SK-N-SH (cell line): ENCODE measurements at regions of chr6 and their contacts with region 1.

Region 1: DNA sequence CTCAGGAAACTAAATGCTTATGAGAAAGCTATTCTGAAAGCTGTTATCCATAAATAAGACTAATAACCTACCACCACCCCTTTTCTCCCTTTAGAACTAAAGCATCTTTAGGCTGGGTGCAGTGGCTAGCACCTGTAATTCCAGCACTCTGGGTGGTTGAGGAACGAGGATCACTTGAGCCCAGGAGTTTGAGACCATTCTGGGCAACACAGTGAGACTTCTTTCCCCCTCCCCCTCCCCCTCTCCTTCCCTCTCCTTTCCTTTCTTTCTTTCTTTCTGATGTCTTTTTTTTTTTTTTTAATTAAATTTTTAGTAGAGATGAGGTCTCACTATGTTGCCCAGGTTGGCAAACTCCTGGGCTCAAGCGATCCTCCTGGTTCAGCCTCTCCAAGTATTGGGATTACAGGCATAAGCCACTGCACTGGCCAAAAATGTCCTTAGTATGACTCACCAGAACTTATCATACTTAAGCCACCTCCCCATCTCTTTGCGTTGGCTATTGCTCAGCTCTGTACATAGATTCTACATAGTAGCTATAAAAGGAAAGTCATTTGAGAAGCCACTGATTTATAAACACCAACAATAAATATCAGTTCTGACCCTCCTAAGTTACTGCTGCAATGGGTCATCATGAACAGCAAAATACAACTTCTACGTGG is 54.8 kb upstream of the SPDEF start:
- DNase-seq: no peak
- H3K4me3 ChIP-seq: no peak overlapping the region
- H3K27ac ChIP-seq: peak overlapping the region in 1 of 2 experiments; percentile 59; a peak in 2 of 4 replicates
- H3K4me1 ChIP-seq: peaks cover 0 to 14% of the 10 kb centered on the region in 2 experiments; a peak in 2 of 4 replicates
- H3K27me3 ChIP-seq: no peaks in the 10 kb centered on the region
- CTCF ChIP-seq: no peak
- EP300 ChIP-seq: no peak
- RAD21 ChIP-seq: no peak

Region 2: GRCh38 chr6:34196126-34196830 is 414.7 kb before region 1 on chr6:
- CTCF ChIA-PET with region 1: interaction called, 18 read pairs
- POLR2A ChIA-PET with region 1: no interaction called
- DNase-seq: peak; percentile 94
- H3K4me3 ChIP-seq: peak overlapping the region; percentile 40 to 50
- H3K27ac ChIP-seq: no peak overlapping the region
- H3K4me1 ChIP-seq: peaks cover 0 to 8% of the 10 kb centered on the region in 2 experiments; a peak in 1 of 4 replicates
- H3K27me3 ChIP-seq: no peaks in the 10 kb centered on the region
- CTCF ChIP-seq: peak; percentile 89
- EP300 ChIP-seq: no peak
- RAD21 ChIP-seq: peak; percentile 85

Region 3: DNA sequence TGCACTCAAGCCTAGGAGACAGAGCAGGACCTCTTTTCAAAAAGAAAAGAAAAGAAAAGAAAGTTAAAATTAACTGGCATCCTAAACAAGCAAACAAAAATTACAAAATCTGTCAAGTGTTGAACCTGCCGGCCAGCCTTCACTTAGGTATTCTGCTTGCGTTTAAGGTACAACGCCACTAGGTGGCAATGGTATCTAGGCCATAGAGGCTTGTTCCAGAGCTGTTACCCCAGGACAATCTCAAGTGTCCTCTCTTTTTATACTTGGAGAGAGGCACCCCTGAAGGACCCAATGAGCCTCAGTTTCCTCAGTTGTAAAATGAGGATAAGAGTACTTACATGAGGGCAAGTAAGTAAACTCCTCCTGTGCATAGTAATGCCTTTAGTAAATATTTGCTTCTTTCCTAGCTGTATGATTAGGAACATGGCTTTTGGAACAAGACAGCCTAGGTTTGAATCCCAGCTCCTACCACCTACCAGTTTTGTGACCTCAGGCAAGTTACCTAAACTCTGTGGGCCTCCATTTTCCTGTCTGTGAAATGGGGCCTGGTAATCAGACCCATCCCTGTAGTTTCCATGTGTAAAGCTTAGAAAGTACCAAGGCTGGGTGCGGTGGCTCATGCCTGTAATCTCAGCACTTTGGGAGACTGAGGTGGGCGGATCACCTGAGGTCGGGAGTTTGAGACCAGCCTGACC is 150.9 kb before region 1 on chr6:
- CTCF ChIA-PET with region 1: interaction called, 74 read pairs
- POLR2A ChIA-PET with region 1: no interaction called
- DNase-seq: peak; percentile 63
- H3K4me3 ChIP-seq: no peak overlapping the region
- H3K27ac ChIP-seq: no peak overlapping the region
- H3K4me1 ChIP-seq: peaks cover 0 to 3% of the 10 kb centered on the region in 2 experiments; a peak in 1 of 4 replicates
- H3K27me3 ChIP-seq: no peaks in the 10 kb centered on the region
- CTCF ChIP-seq: peak; percentile 55
- EP300 ChIP-seq: no peak
- RAD21 ChIP-seq: peak; percentile 87

Region 4: GRCh38 chr6:34515473-34516387 is 95.2 kb before region 1 on chr6:
- CTCF ChIA-PET with region 1: interaction called, 11 read pairs
- POLR2A ChIA-PET with region 1: no interaction called
- DNase-seq: peak; percentile 9
- H3K4me3 ChIP-seq: no peak overlapping the region
- H3K27ac ChIP-seq: no peak overlapping the region
- H3K4me1 ChIP-seq: peaks cover 0 to 10% of the 10 kb centered on the region in 2 experiments; a peak in 1 of 4 replicates
- H3K27me3 ChIP-seq: no peaks in the 10 kb centered on the region; the same call in 1 of the 2 replicates
- CTCF ChIP-seq: no peak
- EP300 ChIP-seq: no peak
- RAD21 ChIP-seq: no peak

Region 5: GRCh38 chr6:34536251-34536950 is 74.5 kb before region 1 on chr6:
- CTCF ChIA-PET with region 1: interaction called, 11 read pairs
- POLR2A ChIA-PET with region 1: no interaction called
- DNase-seq: no peak
- H3K4me3 ChIP-seq: no peak overlapping the region
- H3K27ac ChIP-seq: no peak overlapping the region
- H3K4me1 ChIP-seq: peaks cover 0 to 17% of the 10 kb centered on the region in 2 experiments; a peak in 1 of 4 replicates
- H3K27me3 ChIP-seq: no peaks in the 10 kb centered on the region
- CTCF ChIP-seq: no peak
- EP300 ChIP-seq: no peak
- RAD21 ChIP-seq: no peak

Region 6: DNA sequence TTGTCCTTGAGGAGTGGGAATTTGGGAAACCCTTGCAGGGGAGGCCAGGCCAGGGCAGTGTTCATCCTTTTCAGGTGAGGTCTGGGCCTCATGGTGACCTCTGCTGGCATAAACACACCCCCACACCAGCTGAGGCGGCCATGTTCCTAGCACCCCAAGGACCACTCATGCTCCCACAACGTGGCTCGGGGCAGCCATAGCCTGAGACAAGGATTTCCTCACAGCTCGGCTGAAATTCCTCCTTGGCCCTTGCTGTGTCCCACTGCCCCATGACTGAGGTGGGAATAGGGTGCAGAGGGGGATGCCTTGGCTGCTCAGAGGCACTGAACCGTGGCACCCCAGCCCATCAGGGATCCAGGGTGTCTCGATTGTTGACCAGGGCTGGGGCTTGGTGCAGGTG is 27.5 kb before region 1 on chr6:
- CTCF ChIA-PET with region 1: interaction called, 14 read pairs
- POLR2A ChIA-PET with region 1: no interaction called
- DNase-seq: no peak
- H3K4me3 ChIP-seq: no peak overlapping the region
- H3K27ac ChIP-seq: no peak overlapping the region
- H3K4me1 ChIP-seq: peaks cover 0 to 21% of the 10 kb centered on the region in 2 experiments; a peak in 1 of 4 replicates
- H3K27me3 ChIP-seq: no peaks in the 10 kb centered on the region
- CTCF ChIP-seq: peak; percentile 51
- EP300 ChIP-seq: no peak
- RAD21 ChIP-seq: peak; percentile 36